ENCODE measurements at regions of chr20 and their contacts with region 1.

Region 1: DNA sequence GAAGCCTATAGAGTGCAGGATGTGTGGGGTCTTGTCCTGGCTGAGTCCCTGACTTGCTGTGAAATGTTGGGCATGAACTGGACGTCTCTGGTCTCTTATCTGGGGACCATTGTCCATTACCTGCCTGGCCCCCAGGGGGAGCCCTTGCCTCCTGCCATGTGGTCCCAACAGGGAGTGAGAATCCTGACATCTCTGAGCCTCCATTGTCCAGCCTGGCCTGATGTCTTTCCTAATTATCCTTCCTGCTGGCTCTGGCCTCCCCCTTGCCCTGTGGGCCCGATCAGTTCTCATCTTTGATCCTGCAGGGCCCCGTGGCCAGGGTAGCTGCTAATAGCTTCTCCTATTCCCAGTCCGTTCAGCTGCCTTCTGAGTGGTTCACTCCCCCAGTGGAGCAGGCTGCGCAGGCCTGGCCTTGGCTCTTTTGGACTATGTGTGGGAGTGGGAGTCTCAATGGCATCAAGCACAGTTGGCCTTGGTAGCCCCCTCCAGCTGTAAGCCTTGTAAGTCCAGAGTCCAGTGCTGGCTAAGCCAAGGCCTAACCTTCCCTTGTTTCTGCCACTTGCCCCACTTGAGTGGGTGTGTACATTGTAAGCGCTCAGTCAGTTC is 77.9 kb upstream of the RALY start:
- DNase-seq: peak in 4 of 5 donors; percentile 37 to 46 (median 42)
- H3K4me3 ChIP-seq: no peak overlapping the region
- H3K4me3 Mint-ChIP-seq: no peak overlapping the region
- H3K27ac ChIP-seq: no peak overlapping the region
- H3K27ac Mint-ChIP-seq: peak overlapping the region in 1 of 7 donors; percentile 48
- H3K4me1 ChIP-seq: peaks cover 12% of the 10 kb centered on the region
- H3K4me1 Mint-ChIP-seq: peaks cover 6 to 11% (median 8%) of the 10 kb centered on the region in 4 donors
- H3K27me3 ChIP-seq: no peaks in the 10 kb centered on the region
- H3K27me3 Mint-ChIP-seq: peaks cover 0 to 6% of the 10 kb centered on the region in 2 donors

Region 2: GRCh38 chr20:33791959-33792597 is 123.8 kb before region 1 on chr20:
- CTCF ChIA-PET with region 1: interaction called, 80 read pairs
- POLR2A ChIA-PET with region 1: no interaction called
- intact Hi-C with region 1: no loop called
- DNase-seq: peak; percentile 20 to 48 (median 32)
- H3K4me3 ChIP-seq: no peak overlapping the region
- H3K4me3 Mint-ChIP-seq: no peak overlapping the region
- H3K27ac ChIP-seq: no peak overlapping the region
- H3K27ac Mint-ChIP-seq: no peak overlapping the region
- H3K4me1 ChIP-seq: peaks cover 9% of the 10 kb centered on the region
- H3K4me1 Mint-ChIP-seq: peaks cover 6 to 14% (median 10%) of the 10 kb centered on the region in 4 donors
- H3K27me3 ChIP-seq: no peaks in the 10 kb centered on the region
- H3K27me3 Mint-ChIP-seq: no peaks in the 10 kb centered on the region

Region 3: GRCh38 chr20:33871362-33871761 is 44.5 kb before region 1 on chr20:
- CTCF ChIA-PET with region 1: no interaction called
- POLR2A ChIA-PET with region 1: no interaction called
- intact Hi-C with region 1: no loop called
- DNase-seq: no peak
- H3K4me3 ChIP-seq: no peak overlapping the region
- H3K4me3 Mint-ChIP-seq: no peak overlapping the region
- H3K27ac ChIP-seq: no peak overlapping the region
- H3K27ac Mint-ChIP-seq: peak overlapping the region in 1 of 7 donors; percentile 69
- H3K4me1 ChIP-seq: no peaks in the 10 kb centered on the region
- H3K4me1 Mint-ChIP-seq: no peaks in the 10 kb centered on the region
- H3K27me3 ChIP-seq: no peaks in the 10 kb centered on the region
- H3K27me3 Mint-ChIP-seq: peaks cover 2% of the 10 kb centered on the region in 2 donors

Region 4: DNA sequence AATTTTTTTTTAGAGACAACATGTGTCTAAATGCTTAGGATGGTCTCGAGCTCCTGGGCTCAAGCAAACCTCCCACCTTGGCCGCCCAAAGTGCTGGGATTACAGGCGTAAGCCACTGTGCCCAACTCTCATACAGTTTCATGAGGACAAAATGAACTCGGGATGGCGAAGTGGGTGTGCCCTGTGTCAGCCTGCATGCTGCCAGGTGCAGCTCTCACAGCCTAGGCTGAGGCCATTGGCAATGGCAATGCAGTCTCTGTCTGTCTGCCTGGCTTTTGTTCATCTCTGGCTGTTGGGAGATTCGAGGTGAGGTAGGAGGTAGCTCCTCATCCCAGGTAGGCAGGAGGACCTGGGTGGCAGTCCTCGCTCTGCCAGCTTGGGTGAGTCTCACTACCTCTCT is 16.7 kb before region 1 on chr20:
- CTCF ChIA-PET with region 1: interaction called, 11 read pairs
- POLR2A ChIA-PET with region 1: no interaction called
- intact Hi-C with region 1: no loop called
- DNase-seq: no peak
- H3K4me3 ChIP-seq: no peak overlapping the region
- H3K4me3 Mint-ChIP-seq: no peak overlapping the region
- H3K27ac ChIP-seq: no peak overlapping the region
- H3K27ac Mint-ChIP-seq: no peak overlapping the region
- H3K4me1 ChIP-seq: no peaks in the 10 kb centered on the region
- H3K4me1 Mint-ChIP-seq: no peaks in the 10 kb centered on the region
- H3K27me3 ChIP-seq: no peaks in the 10 kb centered on the region
- H3K27me3 Mint-ChIP-seq: peaks cover 18 to 26% of the 10 kb centered on the region in 2 donors

Region 5: GRCh38 chr20:34022154-34022838 is 106.5 kb after region 1 on chr20:
- CTCF ChIA-PET with region 1: interaction called, 16 read pairs
- POLR2A ChIA-PET with region 1: no interaction called
- intact Hi-C with region 1: no loop called
- DNase-seq: peak in 4 of 5 donors; percentile 17 to 28 (median 22)
- H3K4me3 ChIP-seq: no peak overlapping the region
- H3K4me3 Mint-ChIP-seq: peak overlapping the region in 1 of 8 donors; percentile 58
- H3K27ac ChIP-seq: no peak overlapping the region
- H3K27ac Mint-ChIP-seq: peak overlapping the region; percentile 49 to 86 (median 80)
- H3K4me1 ChIP-seq: peaks cover 79% of the 10 kb centered on the region
- H3K4me1 Mint-ChIP-seq: peaks cover 58 to 91% (median 78%) of the 10 kb centered on the region in 4 donors
- H3K27me3 ChIP-seq: no peaks in the 10 kb centered on the region
- H3K27me3 Mint-ChIP-seq: no peaks in the 10 kb centered on the region

Region 6: GRCh38 chr20:34069341-34070078 is 153.7 kb after region 1 on chr20:
- CTCF ChIA-PET with region 1: interaction called, 84 read pairs
- POLR2A ChIA-PET with region 1: interaction called, 3 read pairs
- intact Hi-C with region 1: loop called (anchors 1 kb)
- DNase-seq: peak; percentile 50 to 75 (median 54)
- H3K4me3 ChIP-seq: no peak overlapping the region
- H3K4me3 Mint-ChIP-seq: peak overlapping the region in 1 of 8 donors; percentile 20
- H3K27ac ChIP-seq: no peak overlapping the region
- H3K27ac Mint-ChIP-seq: peak overlapping the region; percentile 10 to 88 (median 73)
- H3K4me1 ChIP-seq: peaks cover 17% of the 10 kb centered on the region
- H3K4me1 Mint-ChIP-seq: peaks cover 26 to 44% (median 35%) of the 10 kb centered on the region in 4 donors
- H3K27me3 ChIP-seq: no peaks in the 10 kb centered on the region
- H3K27me3 Mint-ChIP-seq: no peaks in the 10 kb centered on the region